PC-3 (cell line): ENCODE measurements at regions of chr1 and their contacts with region 1.

Region 1: GRCh38 chr1:40691538-40692428 is at the start of gene NFYC:
- DNase-seq: peak; percentile 99
- ATAC-seq: peak; percentile 86
- H3K4me3 ChIP-seq: peak within 1 kb of the TSS; percentile 92
- H3K27ac ChIP-seq: peak within 1 kb of the TSS; percentile 95
- H3K4me1 ChIP-seq: peaks cover 32% of the 10 kb centered on the region
- H3K27me3 ChIP-seq: no peaks in the 10 kb centered on the region
- CTCF ChIP-seq: no peak
- total RNA-seq, gene NFYC: 49.4 and 52.6 TPM in 2 replicates

Region 2: DNA sequence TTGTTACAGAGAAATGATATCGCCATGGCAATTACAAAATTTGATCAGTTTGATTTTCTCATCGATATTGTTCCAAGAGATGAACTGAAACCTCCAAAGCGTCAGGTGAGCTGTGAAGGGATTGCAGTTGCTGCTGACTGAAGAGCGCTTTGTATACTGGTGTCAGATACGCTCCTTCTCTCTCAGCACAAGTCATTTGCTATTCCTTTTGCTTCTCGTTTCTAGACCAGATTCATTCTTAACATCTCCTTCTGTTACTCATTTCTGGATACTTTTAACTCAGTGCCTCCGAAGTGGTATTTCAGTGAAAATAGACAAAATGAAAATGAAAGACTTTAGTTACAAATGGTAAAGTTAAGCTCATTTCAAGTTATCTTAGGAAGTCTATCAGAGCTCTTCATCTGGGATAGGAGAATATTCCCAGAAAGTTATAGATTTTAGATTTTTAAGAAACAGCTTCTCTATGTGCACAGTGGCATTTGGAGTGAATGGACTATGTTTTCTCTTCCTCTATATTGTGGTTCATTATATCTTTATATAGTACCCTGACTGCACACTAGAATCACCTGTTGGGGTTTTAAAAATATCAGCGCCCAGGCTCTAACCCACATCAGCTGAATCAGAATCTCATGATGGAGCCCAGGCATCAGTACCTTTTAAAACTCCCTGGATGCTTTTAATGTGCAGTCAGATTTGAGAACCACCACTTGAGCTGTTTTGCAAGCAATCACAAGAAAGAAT is 61.5 kb after region 1 on chr1:
- CTCF ChIA-PET with region 1: no interaction called
- POLR2A ChIA-PET with region 1: interaction called, 6 read pairs
- intact Hi-C with region 1: loop called (anchors 5 kb)
- DNase-seq: no peak
- ATAC-seq: no peak
- H3K4me3 ChIP-seq: no peak overlapping the region
- H3K27ac ChIP-seq: no peak overlapping the region
- H3K4me1 ChIP-seq: peaks cover 32% of the 10 kb centered on the region
- H3K27me3 ChIP-seq: no peaks in the 10 kb centered on the region
- CTCF ChIP-seq: no peak

Region 3: DNA sequence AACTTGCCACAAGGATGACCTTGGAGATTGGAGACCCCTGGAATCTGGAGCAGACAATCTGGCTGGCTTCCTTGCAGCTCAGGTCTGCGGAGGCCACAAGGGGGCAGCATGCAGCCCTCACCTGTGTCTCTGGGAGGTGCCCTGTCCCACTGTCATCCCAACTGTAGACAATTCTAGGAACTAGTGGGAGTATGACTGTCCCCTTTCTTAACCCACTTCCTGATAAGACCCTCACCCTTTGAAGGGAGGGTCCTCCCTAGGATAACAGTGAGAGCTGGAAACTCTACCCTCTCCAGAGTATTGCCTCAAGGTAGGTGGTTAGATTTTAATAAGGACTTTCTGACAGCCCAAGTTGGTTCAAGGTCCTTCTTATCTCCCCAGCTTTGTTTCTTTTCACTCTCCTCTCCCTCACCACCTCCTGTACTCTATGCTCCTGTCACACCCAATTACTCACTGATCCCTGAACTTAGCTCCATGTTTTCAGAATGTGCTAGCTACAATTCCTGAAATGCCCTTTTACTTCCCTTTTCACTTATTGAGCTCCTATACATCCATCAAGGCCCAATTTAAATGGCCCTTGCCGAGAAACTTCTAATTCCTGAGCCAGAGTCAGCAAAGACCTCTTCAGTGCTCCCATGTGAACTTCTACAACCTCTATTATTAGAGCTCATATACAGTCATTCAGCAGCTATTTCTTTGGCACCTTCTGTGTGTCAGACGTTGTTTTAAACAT is 82.6 kb after region 1 on chr1:
- CTCF ChIA-PET with region 1: interaction called, 3 read pairs
- POLR2A ChIA-PET with region 1: no interaction called
- intact Hi-C with region 1: loop called (anchors 5 kb)
- DNase-seq: peak; percentile 67
- ATAC-seq: peak; percentile 72
- H3K4me3 ChIP-seq: no peak overlapping the region
- H3K27ac ChIP-seq: no peak overlapping the region
- H3K4me1 ChIP-seq: no peaks in the 10 kb centered on the region
- H3K27me3 ChIP-seq: no peaks in the 10 kb centered on the region
- CTCF ChIP-seq: peak; percentile 92